PC-9 (cell line): ENCODE measurements at regions of chr7 and their contacts with region 1.

Region 1: GRCh38 chr7:107609811-107610261 is 29.8 kb downstream of the BCAP29 start:
- DNase-seq: no peak
- H3K4me3 ChIP-seq: no peak overlapping the region
- H3K27ac ChIP-seq: no peak overlapping the region
- H3K4me1 ChIP-seq: peaks cover 23% of the 10 kb centered on the region
- H3K27me3 ChIP-seq: no peaks in the 10 kb centered on the region
- CTCF ChIP-seq: no peak

Region 2: DNA sequence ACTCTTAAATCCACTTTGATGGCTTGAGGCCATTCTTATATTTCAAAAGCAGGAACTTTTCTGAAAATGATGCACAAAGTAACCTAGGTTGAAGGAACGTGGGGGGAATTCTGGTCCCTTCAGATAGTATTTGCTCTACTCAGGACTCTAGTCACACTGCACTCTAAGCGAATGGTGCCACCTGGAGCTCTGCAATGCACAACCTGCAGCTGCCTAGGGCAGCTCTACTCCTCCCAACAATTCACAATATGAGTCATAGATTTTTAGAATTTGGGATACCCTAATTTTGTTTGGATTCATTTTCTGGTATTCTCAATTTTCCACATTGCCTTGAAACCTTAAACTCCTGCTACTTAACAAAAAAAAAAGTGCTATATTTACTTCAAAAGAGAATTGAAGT is 1515.0 kb before region 1 on chr7:
- CTCF ChIA-PET with region 1: no interaction called
- POLR2A ChIA-PET with region 1: interaction called, 12 read pairs
- intact Hi-C with region 1: no loop called
- DNase-seq: no peak
- H3K4me3 ChIP-seq: no peak overlapping the region
- H3K27ac ChIP-seq: no peak overlapping the region
- H3K4me1 ChIP-seq: no peaks in the 10 kb centered on the region
- H3K27me3 ChIP-seq: no peaks in the 10 kb centered on the region
- CTCF ChIP-seq: peak; percentile 22; the same call in 1 of the 2 replicates